ENCODE measurements at regions of chr6 and their contacts with region 1.

Region 1: GRCh38 chr6:2846873-2847224 is 5.2 kb upstream of the SERPINB1 start:
- DNase-seq: no peak
- ATAC-seq: no peak
- H3K4me3 ChIP-seq: peak overlapping the region in 1 of 2 experiments; percentile 44; a peak in 2 of 4 replicates
- H3K27ac ChIP-seq: peak overlapping the region; percentile 64
- H3K4me1 ChIP-seq: peaks cover 31% of the 10 kb centered on the region
- H3K27me3 ChIP-seq: no peaks in the 10 kb centered on the region
- CTCF ChIP-seq: no peak

Region 2: GRCh38 chr6:2596222-2596621 is 250.6 kb before region 1 on chr6:
- CTCF ChIA-PET with region 1: no interaction called
- POLR2A ChIA-PET with region 1: no interaction called
- in situ Hi-C with region 1: no loop called
- intact Hi-C with region 1: no loop called
- DNase-seq: no peak
- ATAC-seq: no peak
- H3K4me3 ChIP-seq: no peak overlapping the region
- H3K27ac ChIP-seq: no peak overlapping the region
- H3K4me1 ChIP-seq: no peaks in the 10 kb centered on the region
- H3K27me3 ChIP-seq: no peaks in the 10 kb centered on the region
- CTCF ChIP-seq: peak; percentile 37; the same call in 1 of the 2 replicates

Region 3: DNA sequence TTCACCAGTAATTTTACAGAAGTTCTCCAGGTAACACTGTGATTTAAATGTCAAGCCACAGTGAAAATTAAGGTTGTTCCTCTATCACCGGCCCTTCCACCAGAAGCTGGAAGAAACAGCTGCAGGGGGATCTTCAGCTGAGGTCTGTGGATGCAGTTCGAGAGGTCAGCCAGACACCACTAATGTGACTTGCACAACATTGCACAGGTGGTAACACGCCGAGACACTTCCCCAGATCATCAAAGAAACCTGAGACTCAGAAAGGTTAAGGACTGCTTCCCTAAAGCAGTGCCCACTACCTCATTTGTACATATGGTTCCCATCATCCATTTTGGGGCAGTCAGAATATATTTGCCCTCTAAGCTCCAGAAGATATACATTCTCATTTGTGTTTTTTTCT is 64.3 kb after region 1 on chr6:
- CTCF ChIA-PET with region 1: interaction called, 13 read pairs
- POLR2A ChIA-PET with region 1: no interaction called
- in situ Hi-C with region 1: no loop called
- intact Hi-C with region 1: loop called (anchors 1 kb)
- DNase-seq: no peak
- ATAC-seq: no peak
- H3K4me3 ChIP-seq: no peak overlapping the region
- H3K27ac ChIP-seq: no peak overlapping the region
- H3K4me1 ChIP-seq: no peaks in the 10 kb centered on the region
- H3K27me3 ChIP-seq: no peaks in the 10 kb centered on the region
- CTCF ChIP-seq: no peak

Region 4: DNA sequence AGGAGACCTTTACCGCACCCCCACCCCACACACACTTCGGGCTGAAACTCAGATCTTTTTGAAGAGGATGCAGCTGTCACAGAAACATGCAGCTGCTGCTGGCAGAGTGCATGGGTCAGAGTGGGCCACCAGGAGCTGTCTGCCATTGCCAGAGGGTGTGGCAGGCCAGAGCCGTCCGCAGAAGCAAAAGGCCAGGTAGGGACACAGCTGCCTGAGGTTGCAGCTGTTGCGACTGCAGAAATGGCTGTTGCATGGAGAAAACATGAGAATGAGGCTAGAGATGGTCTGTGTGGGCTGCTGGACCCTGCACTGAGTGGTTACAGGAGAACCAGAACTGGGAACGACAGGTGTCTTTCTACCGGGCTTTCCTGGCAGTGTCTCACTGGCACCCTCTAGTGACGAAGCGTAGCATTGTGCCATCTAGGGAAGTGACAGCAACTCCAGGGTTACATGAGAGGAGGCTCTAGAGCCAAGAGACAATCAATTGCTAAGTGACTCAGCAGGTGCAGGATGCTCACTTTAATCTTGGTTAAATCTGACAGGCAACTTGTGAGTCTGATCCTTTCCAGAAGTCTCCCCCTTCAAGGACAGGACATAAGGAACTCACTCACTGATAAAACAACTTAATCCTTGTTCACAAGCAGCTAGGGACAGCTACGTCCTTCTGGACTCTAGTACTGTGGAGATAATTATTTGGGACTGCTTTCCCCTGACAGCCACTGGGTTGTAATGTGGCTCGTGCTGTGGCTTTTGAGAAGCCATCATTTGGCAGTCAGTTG is 85.3 kb after region 1 on chr6:
- CTCF ChIA-PET with region 1: interaction called, 20 read pairs
- POLR2A ChIA-PET with region 1: interaction called, 3 read pairs
- in situ Hi-C with region 1: no loop called
- intact Hi-C with region 1: loop called (anchors 1 kb)
- DNase-seq: peak; percentile 74
- ATAC-seq: peak; percentile 99
- H3K4me3 ChIP-seq: no peak overlapping the region
- H3K27ac ChIP-seq: no peak overlapping the region
- H3K4me1 ChIP-seq: no peaks in the 10 kb centered on the region
- H3K27me3 ChIP-seq: peaks cover 3% of the 10 kb centered on the region; the same call in 1 of the 2 replicates
- CTCF ChIP-seq: peak; percentile 99